T-cell (primary cell): ENCODE measurements at regions of chr4 and their contacts with region 1.

Region 1: DNA sequence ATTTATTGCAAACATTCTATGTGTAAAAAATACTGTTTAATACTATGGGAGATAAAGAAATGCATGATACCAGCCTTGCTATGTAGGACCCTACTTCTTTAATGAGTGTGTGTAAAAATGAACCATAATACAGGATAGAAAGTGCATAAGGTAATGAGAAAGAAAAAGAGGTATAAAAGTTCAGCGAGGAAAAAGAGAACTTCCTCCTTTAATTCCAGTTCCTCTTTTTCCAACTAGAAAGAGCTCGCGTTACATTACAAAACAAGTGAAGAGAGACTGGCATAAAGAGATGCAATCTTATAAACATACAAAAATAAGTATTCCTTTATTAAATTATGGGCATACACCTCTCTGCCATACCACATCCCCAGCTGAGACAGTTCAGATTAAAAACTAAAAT is 77.4 kb downstream of the ANKRD17 start:
- DNase-seq: no peak
- ATAC-seq: no peak
- H3K4me3 ChIP-seq: no peak overlapping the region
- H3K4me3 Mint-ChIP-seq: no peak overlapping the region
- H3K27ac ChIP-seq: no peak overlapping the region
- H3K27ac Mint-ChIP-seq: peak overlapping the region in 1 of 2 donors; percentile 17
- H3K4me1 ChIP-seq: no peaks in the 10 kb centered on the region
- H3K4me1 Mint-ChIP-seq: peaks cover 37 to 48% (median 45%) of the 10 kb centered on the region in 3 donors
- H3K27me3 ChIP-seq: no peaks in the 10 kb centered on the region
- H3K27me3 Mint-ChIP-seq: no peaks in the 10 kb centered on the region

Region 2: GRCh38 chr4:73080789-73081188 is 100.4 kb before region 1 on chr4:
- CTCF ChIA-PET with region 1: interaction called in 1 of 2 experiments, 10 read pairs
- POLR2A ChIA-PET with region 1: no interaction called
- DNase-seq: no peak
- ATAC-seq: no peak
- H3K4me3 ChIP-seq: no peak overlapping the region
- H3K4me3 Mint-ChIP-seq: no peak overlapping the region
- H3K27ac ChIP-seq: no peak overlapping the region
- H3K27ac Mint-ChIP-seq: peak overlapping the region; percentile 37 to 69
- H3K4me1 ChIP-seq: peaks cover 0 to 3% of the 10 kb centered on the region in 2 experiments
- H3K4me1 Mint-ChIP-seq: peaks cover 0 to 16% (median 9%) of the 10 kb centered on the region in 3 donors
- H3K27me3 ChIP-seq: no peaks in the 10 kb centered on the region
- H3K27me3 Mint-ChIP-seq: no peaks in the 10 kb centered on the region

Region 3: GRCh38 chr4:73152893-73153292 is 28.3 kb before region 1 on chr4:
- CTCF ChIA-PET with region 1: no interaction called
- POLR2A ChIA-PET with region 1: no interaction called
- DNase-seq: no peak
- ATAC-seq: no peak
- H3K4me3 ChIP-seq: no peak overlapping the region
- H3K4me3 Mint-ChIP-seq: no peak overlapping the region
- H3K27ac ChIP-seq: no peak overlapping the region
- H3K27ac Mint-ChIP-seq: no peak overlapping the region
- H3K4me1 ChIP-seq: no peaks in the 10 kb centered on the region
- H3K4me1 Mint-ChIP-seq: peaks cover 0 to 6% (median 0%) of the 10 kb centered on the region in 3 donors
- H3K27me3 ChIP-seq: no peaks in the 10 kb centered on the region
- H3K27me3 Mint-ChIP-seq: no peaks in the 10 kb centered on the region

Region 4: GRCh38 chr4:73267050-73267449 is 85.8 kb after region 1 on chr4:
- CTCF ChIA-PET with region 1: no interaction called
- POLR2A ChIA-PET with region 1: no interaction called
- DNase-seq: no peak
- ATAC-seq: no peak
- H3K4me3 ChIP-seq: no peak overlapping the region
- H3K4me3 Mint-ChIP-seq: no peak overlapping the region
- H3K27ac ChIP-seq: no peak overlapping the region
- H3K27ac Mint-ChIP-seq: no peak overlapping the region
- H3K4me1 ChIP-seq: no peaks in the 10 kb centered on the region
- H3K4me1 Mint-ChIP-seq: peaks cover 5 to 10% (median 8%) of the 10 kb centered on the region in 3 donors
- H3K27me3 ChIP-seq: no peaks in the 10 kb centered on the region
- H3K27me3 Mint-ChIP-seq: no peaks in the 10 kb centered on the region